Thyroid gland (tissue), 4 donors: ENCODE measurements at regions of chr2 and their contacts with region 1.

Region 1: DNA sequence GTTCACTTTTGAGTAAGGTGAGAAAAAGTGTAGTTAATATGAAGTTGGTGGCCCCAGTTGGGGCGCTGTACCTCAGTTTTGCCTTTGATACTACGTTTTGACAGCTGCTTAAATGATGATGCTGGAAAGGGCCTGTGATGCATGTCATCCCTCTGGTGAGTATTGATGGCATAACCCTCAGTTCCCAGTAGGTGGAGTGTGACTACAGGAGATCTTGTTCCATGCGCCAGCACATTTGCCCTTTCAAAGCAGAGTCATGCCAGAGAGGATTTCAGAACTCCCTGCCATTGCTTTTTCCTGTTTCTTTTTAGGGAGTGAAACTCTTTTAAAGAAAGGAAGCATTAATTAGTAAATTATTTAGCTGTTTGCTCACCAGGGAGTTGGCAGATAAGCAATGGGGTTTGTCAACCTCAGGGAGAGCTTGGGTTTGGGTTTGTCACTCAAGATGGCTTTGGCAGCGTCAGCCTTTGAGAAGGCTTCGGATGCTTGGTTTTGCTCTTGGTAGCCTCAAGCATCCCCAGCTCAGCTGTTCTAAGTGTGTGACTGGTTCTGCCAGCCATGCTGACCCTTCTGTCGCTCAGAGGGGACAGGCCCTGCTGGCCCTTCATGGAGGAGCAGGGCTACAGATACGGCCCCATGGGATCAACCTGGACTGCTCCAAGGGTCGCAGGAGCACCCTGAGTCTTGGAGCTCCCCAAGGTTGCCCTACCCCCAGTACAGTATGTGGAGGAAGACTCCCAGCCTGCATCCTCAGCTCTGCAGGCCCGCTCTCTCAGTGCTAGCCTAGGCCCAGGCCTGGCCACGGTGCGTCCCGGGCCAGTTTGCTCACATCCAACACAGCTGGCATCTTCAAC is 29.1 kb downstream of the ARMC9 start:
- DNase-seq: peak; percentile 63 to 71
- H3K4me3 ChIP-seq: no peak overlapping the region
- H3K27ac ChIP-seq: no peak overlapping the region
- H3K4me1 ChIP-seq: peaks cover 0 to 23% of the 10 kb centered on the region in 2 donors
- H3K27me3 ChIP-seq: no peaks in the 10 kb centered on the region
- CTCF ChIP-seq: peak; percentile 44 to 87 (median 76)
- POLR2A ChIP-seq: no peak

Region 2: GRCh38 chr2:231034291-231034882 is 193.1 kb before region 1 on chr2:
- intact Hi-C with region 1: no loop called
- DNase-seq: no peak
- H3K4me3 ChIP-seq: no peak overlapping the region
- H3K27ac ChIP-seq: no peak overlapping the region
- H3K4me1 ChIP-seq: no peaks in the 10 kb centered on the region
- H3K27me3 ChIP-seq: peaks cover 9% of the 10 kb centered on the region
- CTCF ChIP-seq: no peak
- POLR2A ChIP-seq: no peak

Region 3: GRCh38 chr2:231411831-231412617 is 184.5 kb after region 1 on chr2:
- intact Hi-C with region 1: loop called (anchors 5 kb)
- DNase-seq: peak; percentile 87 to 90
- H3K4me3 ChIP-seq: peak overlapping the region; percentile 48 to 67 (median 63)
- H3K27ac ChIP-seq: no peak overlapping the region
- H3K4me1 ChIP-seq: peaks cover 5 to 9% of the 10 kb centered on the region in 2 donors
- H3K27me3 ChIP-seq: no peaks in the 10 kb centered on the region
- CTCF ChIP-seq: peak; percentile 64 to 96 (median 80)
- POLR2A ChIP-seq: no peak